Esophagus squamous epithelium (tissue), 5 donors: ENCODE measurements at regions of chr6 and their contacts with region 1.

Region 1: DNA sequence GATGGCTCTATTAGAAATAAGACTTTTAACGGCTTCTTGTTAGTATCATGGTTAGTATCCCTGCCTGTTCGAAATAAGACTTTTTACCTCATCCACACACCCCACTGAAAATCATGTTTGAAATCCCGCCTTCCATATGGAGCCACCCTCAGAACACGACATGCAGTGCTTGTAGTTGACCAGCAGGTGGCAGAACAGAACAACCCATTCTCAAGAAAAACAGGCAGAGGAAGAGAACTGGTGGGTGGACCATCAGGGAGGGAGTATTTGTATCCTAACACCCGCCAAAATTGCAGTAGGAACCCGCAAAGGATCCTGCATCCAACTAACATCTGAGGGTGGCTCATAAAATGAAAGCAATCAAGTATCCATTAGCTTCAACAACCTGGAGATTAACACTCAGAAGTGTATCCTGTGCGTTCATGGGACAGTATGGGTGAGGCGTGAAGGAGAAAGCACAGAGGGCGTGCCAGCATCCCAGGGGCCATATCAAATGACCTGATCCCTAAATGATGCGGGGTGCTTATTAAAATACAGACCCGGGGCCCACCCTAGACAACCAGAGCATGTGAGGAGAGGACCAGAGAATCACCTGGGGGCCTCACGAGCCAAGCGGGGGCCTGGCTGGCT is 89.6 kb upstream of the NHSL1 start:
- DNase-seq: no peak
- H3K4me3 ChIP-seq: no peak overlapping the region
- H3K27ac ChIP-seq: no peak overlapping the region
- H3K4me1 ChIP-seq: peaks cover 7 to 35% (median 7%) of the 10 kb centered on the region in 3 donors
- H3K27me3 ChIP-seq: no peaks in the 10 kb centered on the region
- CTCF ChIP-seq: peak; percentile 64 to 95 (median 93)
- POLR2A ChIP-seq: no peak

Region 2: DNA sequence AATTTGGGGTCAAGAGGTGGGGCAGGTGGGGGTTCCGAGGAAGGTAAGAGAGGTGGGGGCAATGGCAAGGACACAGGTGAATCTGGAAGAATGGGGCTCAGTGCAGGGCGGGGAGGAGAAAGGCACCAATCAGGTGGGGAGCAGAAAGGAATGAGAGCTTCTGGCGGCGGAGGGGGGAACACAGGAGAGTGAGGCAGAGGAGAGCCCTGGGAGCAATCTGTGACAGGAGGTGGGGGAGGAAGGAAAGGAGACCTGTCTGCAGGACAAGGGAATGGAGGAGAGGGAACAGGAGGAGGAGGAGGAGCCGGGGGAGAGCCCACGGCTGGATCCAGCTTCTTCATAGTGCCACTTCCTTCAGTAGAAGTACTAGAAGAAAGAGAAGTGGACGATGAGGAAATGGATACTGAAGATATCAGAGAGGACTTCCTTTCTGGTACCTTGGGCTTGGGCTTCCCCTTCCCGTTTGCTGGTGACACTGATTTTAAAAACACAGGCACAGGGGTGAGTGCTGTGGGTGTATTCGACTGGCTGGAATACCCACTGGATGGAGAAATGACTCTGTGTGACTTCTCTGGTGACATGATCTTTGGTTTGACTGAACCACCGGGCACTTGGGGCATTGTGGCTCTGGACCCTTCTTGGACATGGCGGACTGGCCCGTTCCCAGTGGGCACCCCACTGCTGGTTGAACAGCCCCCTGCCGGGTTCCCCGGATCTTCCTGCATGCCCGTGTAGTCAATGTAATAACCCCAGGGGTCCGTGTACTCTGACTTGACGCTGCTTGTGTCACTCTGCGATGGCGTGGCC is 157.5 kb before region 1 on chr6:
- intact Hi-C with region 1: loop called (anchors 10 kb)
- DNase-seq: no peak
- H3K4me3 ChIP-seq: no peak overlapping the region
- H3K27ac ChIP-seq: no peak overlapping the region
- H3K4me1 ChIP-seq: peaks cover 0 to 3% (median 0%) of the 10 kb centered on the region in 3 donors
- H3K27me3 ChIP-seq: no peaks in the 10 kb centered on the region
- CTCF ChIP-seq: no peak
- POLR2A ChIP-seq: no peak

Region 3: GRCh38 chr6:138485005-138485545 is 103.8 kb before region 1 on chr6:
- intact Hi-C with region 1: no loop called
- DNase-seq: no peak
- H3K4me3 ChIP-seq: peak overlapping the region in 1 of 4 donors; percentile 42
- H3K27ac ChIP-seq: no peak overlapping the region
- H3K4me1 ChIP-seq: peaks cover 0 to 17% (median 0%) of the 10 kb centered on the region in 3 donors
- H3K27me3 ChIP-seq: no peaks in the 10 kb centered on the region
- CTCF ChIP-seq: no peak
- POLR2A ChIP-seq: no peak

Region 4: DNA sequence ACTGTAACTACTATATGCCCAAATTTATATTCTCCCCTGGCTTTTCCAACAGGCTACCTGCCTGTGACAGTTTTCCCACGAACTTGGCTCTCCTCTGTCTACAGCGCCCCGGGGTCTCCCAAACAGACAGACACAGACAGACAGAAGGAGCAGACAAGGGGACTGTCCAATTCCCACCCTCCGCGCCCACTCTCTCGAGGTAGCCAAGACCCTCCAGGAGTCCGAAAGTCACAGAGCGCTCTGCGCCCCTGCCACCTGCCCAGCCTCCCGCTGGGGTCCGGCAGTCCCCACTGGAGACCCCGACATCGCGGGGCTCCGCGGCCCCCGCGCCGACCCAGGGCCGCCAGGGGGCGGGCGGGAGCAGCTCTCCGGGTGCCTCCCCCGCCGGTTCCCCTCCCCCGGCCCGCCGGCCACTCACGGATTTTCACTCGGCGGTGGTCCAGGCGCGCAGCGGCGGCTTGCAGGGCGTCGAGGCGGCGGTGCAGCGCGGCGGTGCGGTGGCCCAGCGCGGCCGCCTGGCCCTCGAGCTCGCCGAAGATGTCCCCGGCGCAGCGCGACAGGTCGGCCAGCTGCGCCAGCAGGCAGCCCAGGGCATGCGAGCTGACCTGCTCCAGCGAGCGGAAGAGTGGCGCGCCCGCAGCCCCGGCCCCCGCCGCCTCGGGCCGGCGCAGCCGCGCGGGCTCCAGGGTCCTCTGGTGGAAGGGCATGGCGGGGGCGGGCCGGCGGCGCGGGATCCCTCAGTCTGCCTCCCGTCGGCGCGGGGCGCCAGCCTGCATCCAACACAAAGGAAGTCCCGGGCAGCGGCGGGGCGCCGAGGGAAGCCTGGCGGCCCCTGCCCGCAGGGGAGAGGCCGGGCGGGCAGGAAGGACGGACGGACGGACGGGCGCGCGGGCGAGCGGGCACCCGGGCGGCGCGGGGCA is 103.4 kb after region 1 on chr6:
- intact Hi-C with region 1: loop called (anchors 10 kb)
- DNase-seq: no peak
- H3K4me3 ChIP-seq: peak overlapping the region; percentile 63 to 95 (median 88)
- H3K27ac ChIP-seq: peak overlapping the region; percentile 85 to 96 (median 94)
- H3K4me1 ChIP-seq: peaks cover 3 to 46% (median 24%) of the 10 kb centered on the region in 3 donors
- H3K27me3 ChIP-seq: no peaks in the 10 kb centered on the region
- CTCF ChIP-seq: peak; percentile 77 to 92 (median 86)
- POLR2A ChIP-seq: peak in 1 of 4 donors; percentile 4

Region 5: DNA sequence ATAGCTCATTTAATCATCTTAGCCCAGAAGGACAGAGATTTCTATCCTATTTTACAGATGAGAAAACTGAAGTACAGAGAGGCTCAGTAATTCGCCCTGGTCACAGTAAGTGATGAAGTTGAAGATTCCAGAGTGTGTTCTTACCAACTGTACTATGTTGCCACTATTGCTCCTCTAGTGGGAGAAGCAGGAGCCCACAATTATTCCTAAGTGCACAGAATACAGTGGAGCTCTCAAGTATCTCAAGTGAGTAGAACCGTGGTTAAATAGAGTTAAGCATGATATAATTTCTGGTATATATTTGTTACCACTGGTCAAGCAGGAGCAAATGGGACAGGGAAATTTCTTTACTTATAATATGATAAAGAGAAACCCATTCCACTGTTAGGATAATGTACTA is 377.1 kb after region 1 on chr6:
- intact Hi-C with region 1: no loop called
- DNase-seq: no peak
- H3K4me3 ChIP-seq: no peak overlapping the region
- H3K27ac ChIP-seq: no peak overlapping the region
- H3K4me1 ChIP-seq: peaks cover 7 to 45% (median 8%) of the 10 kb centered on the region in 3 donors
- H3K27me3 ChIP-seq: no peaks in the 10 kb centered on the region
- CTCF ChIP-seq: no peak
- POLR2A ChIP-seq: no peak